Activated CD8-positive, alpha-beta memory T cell treated with anti-CD3 and anti-CD28 coated beads, Interleukin-2, amount 10 ng/mL, durations not matched to agents 7 days and 5 days (primary cell): ENCODE measurements at regions of chr14 and their contacts with region 1.

Region 1: GRCh38 chr14:100285021-100285912 is 21.0 kb downstream of the SLC25A29 start:
- DNase-seq: peak; percentile 83
- ATAC-seq: peak; percentile 93
- H3K4me3 Mint-ChIP-seq: peak overlapping the region; percentile 67
- H3K27ac Mint-ChIP-seq: peak overlapping the region; percentile 61
- H3K4me1 Mint-ChIP-seq: peaks cover 19% of the 10 kb centered on the region
- H3K27me3 Mint-ChIP-seq: no peaks in the 10 kb centered on the region

Region 2: GRCh38 chr14:100263144-100263543 is 22.1 kb before region 1 on chr14:
- CTCF ChIA-PET with region 1: interaction called, 22 read pairs
- DNase-seq: no peak
- ATAC-seq: no peak
- H3K4me3 Mint-ChIP-seq: no peak overlapping the region
- H3K27ac Mint-ChIP-seq: no peak overlapping the region
- H3K4me1 Mint-ChIP-seq: peaks cover 63% of the 10 kb centered on the region
- H3K27me3 Mint-ChIP-seq: no peaks in the 10 kb centered on the region

Region 3: GRCh38 chr14:100297302-100298300 is 12.3 kb after region 1 on chr14:
- CTCF ChIA-PET with region 1: interaction called, 38 read pairs
- DNase-seq: no peak
- ATAC-seq: no peak
- H3K4me3 Mint-ChIP-seq: no peak overlapping the region
- H3K27ac Mint-ChIP-seq: no peak overlapping the region
- H3K4me1 Mint-ChIP-seq: no peaks in the 10 kb centered on the region
- H3K27me3 Mint-ChIP-seq: no peaks in the 10 kb centered on the region

Region 4: GRCh38 chr14:100312877-100313400 is 27.7 kb after region 1 on chr14:
- CTCF ChIA-PET with region 1: interaction called, 12 read pairs
- DNase-seq: no peak
- ATAC-seq: no peak
- H3K4me3 Mint-ChIP-seq: no peak overlapping the region
- H3K27ac Mint-ChIP-seq: no peak overlapping the region
- H3K4me1 Mint-ChIP-seq: peaks cover 12% of the 10 kb centered on the region
- H3K27me3 Mint-ChIP-seq: peaks cover 7% of the 10 kb centered on the region

Region 5: GRCh38 chr14:100446572-100446971 is 161.3 kb after region 1 on chr14:
- CTCF ChIA-PET with region 1: no interaction called
- DNase-seq: peak; percentile 56
- ATAC-seq: peak; percentile 75
- H3K4me3 Mint-ChIP-seq: no peak overlapping the region
- H3K27ac Mint-ChIP-seq: no peak overlapping the region
- H3K4me1 Mint-ChIP-seq: peaks cover 23% of the 10 kb centered on the region
- H3K27me3 Mint-ChIP-seq: no peaks in the 10 kb centered on the region

Region 6: GRCh38 chr14:100586403-100587085 is 301.3 kb after region 1 on chr14:
- CTCF ChIA-PET with region 1: no interaction called
- DNase-seq: no peak
- ATAC-seq: peak; percentile 43
- H3K4me3 Mint-ChIP-seq: peak overlapping the region; percentile 39
- H3K27ac Mint-ChIP-seq: no peak overlapping the region
- H3K4me1 Mint-ChIP-seq: peaks cover 2% of the 10 kb centered on the region
- H3K27me3 Mint-ChIP-seq: peaks cover 38% of the 10 kb centered on the region